Left ventricle myocardium superior (tissue), 1 donor: ENCODE measurements at regions of chr2 and their contacts with region 1.

Region 1: GRCh38 chr2:36663851-36664695 is 32.4 kb upstream of the VIT start:
- DNase-seq: no peak
- ATAC-seq: peak; percentile 89

Region 2: GRCh38 chr2:36351736-36352349 is 312.2 kb before region 1 on chr2:
- intact Hi-C with region 1: loop called (anchors 5 kb)
- DNase-seq: no peak
- ATAC-seq: no peak